ENCODE measurements at regions of chr5 and their contacts with region 1.

Region 1: DNA sequence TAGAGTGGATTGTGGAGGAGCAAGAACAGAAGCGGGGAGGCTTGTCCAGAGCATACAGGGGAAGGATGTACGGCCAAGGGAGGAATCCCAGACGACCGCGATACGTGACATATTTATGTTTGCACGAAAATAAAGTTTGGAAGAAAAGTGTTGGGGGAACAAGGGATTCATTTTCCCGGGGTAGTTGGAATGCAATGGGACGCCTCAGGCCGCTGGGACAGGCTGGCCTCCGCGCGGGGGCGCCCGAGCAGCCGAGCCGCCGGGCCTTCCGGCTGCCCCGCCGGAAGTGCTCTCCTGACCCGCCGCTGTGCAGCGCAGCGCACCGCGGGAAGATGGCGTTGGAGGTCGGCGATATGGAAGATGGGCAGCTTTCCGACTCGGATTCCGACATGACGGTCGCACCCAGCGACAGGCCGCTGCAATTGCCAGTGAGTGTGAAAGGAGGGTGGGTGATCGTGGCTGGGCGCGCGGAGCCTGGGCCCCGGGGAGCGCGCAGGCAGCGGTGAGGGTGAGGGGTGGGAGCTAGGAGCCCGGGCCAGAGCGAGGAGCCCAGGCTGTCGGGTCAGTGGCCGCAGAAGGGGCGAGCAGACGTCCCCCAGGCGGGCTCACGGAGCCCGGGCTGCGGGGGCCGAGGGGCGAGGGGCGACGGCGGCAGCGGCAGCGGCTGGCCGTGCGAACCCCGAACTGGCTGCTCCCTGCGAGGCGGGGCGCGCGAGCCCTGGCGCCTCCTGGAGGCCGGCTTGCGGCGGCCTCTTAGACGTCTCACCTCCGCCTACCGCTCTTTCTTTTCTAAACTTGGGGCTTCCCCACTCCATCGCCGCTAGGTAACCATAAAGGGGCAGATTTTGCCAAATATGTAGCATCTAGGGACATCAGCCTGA is at the start of gene PHAX:
- DNase-seq: peak; percentile 79
- H3K4me3 ChIP-seq: peak within 1 kb of the TSS; percentile 96 to 98 (median 97)
- H3K27ac ChIP-seq: peak within 1 kb of the TSS; percentile 86
- H3K4me1 ChIP-seq: peaks cover 33% of the 10 kb centered on the region
- H3K27me3 ChIP-seq: no peaks in the 10 kb centered on the region
- CTCF ChIP-seq: peak; percentile 54 to 70
- total RNA-seq, gene PHAX: 49.0 to 52.4 TPM

Region 2: GRCh38 chr5:126544087-126544740 is 56.7 kb before region 1 on chr5:
- CTCF ChIA-PET with region 1: no interaction called
- dilution Hi-C with region 1: no loop called
- in situ Hi-C with region 1: no loop called
- intact Hi-C with region 1: loop called (anchors 1 kb)
- DNase-seq: peak; percentile 25
- H3K4me3 ChIP-seq: no peak overlapping the region
- H3K27ac ChIP-seq: no peak overlapping the region
- H3K4me1 ChIP-seq: no peaks in the 10 kb centered on the region
- H3K27me3 ChIP-seq: no peaks in the 10 kb centered on the region
- CTCF ChIP-seq: peak; percentile 42 to 64

Region 3: DNA sequence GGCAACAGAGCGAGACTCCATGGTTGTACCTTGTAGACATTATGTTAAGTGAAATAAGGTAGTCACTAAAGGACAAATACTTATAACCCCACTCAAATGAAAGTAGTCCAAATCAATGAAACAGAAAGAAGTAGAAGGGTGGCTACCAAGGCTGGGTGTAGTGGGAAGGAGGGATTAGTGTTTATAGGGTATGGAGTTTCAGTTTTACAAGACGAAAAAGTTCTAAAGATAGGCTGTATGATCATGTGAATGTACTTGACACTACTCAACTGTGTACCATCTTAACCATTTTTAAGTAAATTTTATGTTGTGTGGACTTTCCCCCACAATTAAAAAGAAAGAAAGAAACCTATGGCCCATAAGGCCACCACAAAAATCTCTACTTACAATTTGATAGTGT is 38.0 kb before region 1 on chr5:
- CTCF ChIA-PET with region 1: no interaction called
- dilution Hi-C with region 1: no loop called
- in situ Hi-C with region 1: no loop called
- intact Hi-C with region 1: loop called (anchors 1 kb)
- DNase-seq: no peak
- H3K4me3 ChIP-seq: no peak overlapping the region
- H3K27ac ChIP-seq: no peak overlapping the region
- H3K4me1 ChIP-seq: no peaks in the 10 kb centered on the region
- H3K27me3 ChIP-seq: no peaks in the 10 kb centered on the region
- CTCF ChIP-seq: no peak

Region 4: GRCh38 chr5:126656396-126657007 is 55.6 kb after region 1 on chr5:
- CTCF ChIA-PET with region 1: no interaction called
- dilution Hi-C with region 1: no loop called
- in situ Hi-C with region 1: no loop called
- intact Hi-C with region 1: no loop called
- DNase-seq: no peak
- H3K4me3 ChIP-seq: no peak overlapping the region
- H3K27ac ChIP-seq: no peak overlapping the region
- H3K4me1 ChIP-seq: no peaks in the 10 kb centered on the region
- H3K27me3 ChIP-seq: no peaks in the 10 kb centered on the region
- CTCF ChIP-seq: peak; percentile 87 to 88

Region 5: GRCh38 chr5:127229185-127229889 is 628.5 kb after region 1 on chr5:
- CTCF ChIA-PET with region 1: no interaction called
- dilution Hi-C with region 1: no loop called
- in situ Hi-C with region 1: no loop called
- intact Hi-C with region 1: no loop called
- DNase-seq: peak; percentile 24
- H3K4me3 ChIP-seq: peak overlapping the region; percentile 13 to 53 (median 49)
- H3K27ac ChIP-seq: no peak overlapping the region
- H3K4me1 ChIP-seq: peaks cover 13% of the 10 kb centered on the region
- H3K27me3 ChIP-seq: no peaks in the 10 kb centered on the region
- CTCF ChIP-seq: no peak

Region 6: GRCh38 chr5:127870914-127871313 is 1270.0 kb after region 1 on chr5:
- CTCF ChIA-PET with region 1: no interaction called
- dilution Hi-C with region 1: no loop called
- in situ Hi-C with region 1: no loop called
- intact Hi-C with region 1: no loop called
- DNase-seq: peak; percentile 33
- H3K4me3 ChIP-seq: no peak overlapping the region
- H3K27ac ChIP-seq: peak overlapping the region; percentile 59
- H3K4me1 ChIP-seq: peaks cover 15% of the 10 kb centered on the region
- H3K27me3 ChIP-seq: no peaks in the 10 kb centered on the region
- CTCF ChIP-seq: no peak